Transverse colon (tissue), 4 donors: ENCODE measurements at regions of chr5 and their contacts with region 1.

Region 1: DNA sequence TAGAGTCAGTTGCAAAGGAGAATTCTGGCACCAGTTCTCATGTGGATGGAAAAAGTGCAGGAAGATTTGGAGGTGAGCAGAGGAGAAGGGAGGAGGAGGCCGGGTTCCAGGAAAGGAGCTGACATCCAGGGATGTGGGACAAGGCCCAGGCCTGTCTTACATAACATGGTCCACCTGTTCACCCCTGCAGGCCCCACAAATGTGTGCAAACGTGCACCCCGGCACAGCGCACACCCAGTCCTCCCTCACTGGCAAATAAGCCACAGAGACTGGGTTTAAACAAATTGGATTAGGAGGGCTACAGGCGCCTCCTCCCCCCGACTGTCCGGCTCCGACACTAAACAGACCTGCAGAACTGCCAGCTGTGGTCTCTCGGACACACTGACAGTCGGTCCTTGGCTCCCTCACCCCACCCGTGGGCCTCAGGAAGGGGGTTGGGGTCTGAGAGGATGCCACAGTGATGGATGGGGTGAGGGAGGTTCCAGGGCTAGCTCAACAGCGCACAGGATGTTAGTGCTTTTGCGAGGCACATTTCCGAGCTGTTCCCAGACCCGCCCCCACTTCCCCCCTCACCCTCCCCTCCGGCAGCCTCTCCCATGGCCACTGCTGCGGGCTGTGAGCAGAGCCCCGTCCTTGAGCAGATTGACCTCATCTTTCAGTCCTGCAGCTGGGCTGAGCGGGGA is 43.4 kb upstream of the IL17B start:
- DNase-seq: peak; percentile 47
- H3K4me3 ChIP-seq: no peak overlapping the region
- H3K27ac ChIP-seq: peak overlapping the region; percentile 82 to 97 (median 93)
- H3K4me1 ChIP-seq: peaks cover 16 to 62% (median 23%) of the 10 kb centered on the region in 4 donors
- H3K27me3 ChIP-seq: no peaks in the 10 kb centered on the region
- CTCF ChIP-seq: no peak
- EP300 ChIP-seq: no peak
- POLR2A ChIP-seq: peak; percentile 4

Region 2: DNA sequence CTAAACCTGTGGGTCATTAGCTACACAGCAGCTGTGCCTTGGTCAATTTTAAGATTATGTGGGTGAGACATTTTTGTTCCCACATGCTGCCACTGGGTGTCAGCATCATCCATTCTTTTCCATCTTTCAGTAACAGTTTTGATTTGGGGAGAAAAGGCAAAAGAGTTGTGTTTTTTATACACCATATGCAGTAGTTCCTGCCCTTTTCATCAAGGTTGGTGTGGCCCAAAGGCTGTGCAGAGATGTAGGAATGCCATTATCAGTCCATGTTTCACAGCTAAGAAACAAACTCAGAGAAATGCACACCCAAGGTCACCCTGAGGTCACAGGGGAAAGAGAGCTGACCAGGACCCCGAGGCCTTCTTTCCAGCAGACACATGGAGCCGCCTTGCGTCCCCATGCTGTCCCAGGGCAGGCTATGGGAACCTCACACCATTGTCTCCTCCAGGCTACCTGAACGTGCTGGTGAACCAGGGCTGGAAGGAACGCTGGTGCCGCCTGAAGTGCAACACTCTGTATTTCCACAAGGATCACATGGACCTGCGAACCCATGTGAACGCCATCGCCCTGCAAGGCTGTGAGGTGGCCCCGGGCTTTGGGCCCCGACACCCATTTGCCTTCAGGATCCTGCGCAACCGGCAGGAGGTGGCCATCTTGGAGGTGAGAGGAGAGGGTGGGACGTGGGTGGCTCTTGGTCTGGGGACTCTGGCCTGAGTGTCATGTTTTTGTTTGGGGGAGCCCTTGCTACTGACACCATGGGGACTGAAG is 105.0 kb before region 1 on chr5:
- in situ Hi-C with region 1: loop called in 1 of 4 experiments (anchors 10 kb)
- intact Hi-C with region 1: no loop called
- DNase-seq: peak; percentile 27
- H3K4me3 ChIP-seq: no peak overlapping the region
- H3K27ac ChIP-seq: peak overlapping the region in 1 of 4 donors; percentile 31
- H3K4me1 ChIP-seq: peaks cover 13 to 26% (median 19%) of the 10 kb centered on the region in 4 donors
- H3K27me3 ChIP-seq: no peaks in the 10 kb centered on the region
- CTCF ChIP-seq: peak; percentile 64 to 86 (median 71)
- EP300 ChIP-seq: no peak
- POLR2A ChIP-seq: no peak

Region 3: DNA sequence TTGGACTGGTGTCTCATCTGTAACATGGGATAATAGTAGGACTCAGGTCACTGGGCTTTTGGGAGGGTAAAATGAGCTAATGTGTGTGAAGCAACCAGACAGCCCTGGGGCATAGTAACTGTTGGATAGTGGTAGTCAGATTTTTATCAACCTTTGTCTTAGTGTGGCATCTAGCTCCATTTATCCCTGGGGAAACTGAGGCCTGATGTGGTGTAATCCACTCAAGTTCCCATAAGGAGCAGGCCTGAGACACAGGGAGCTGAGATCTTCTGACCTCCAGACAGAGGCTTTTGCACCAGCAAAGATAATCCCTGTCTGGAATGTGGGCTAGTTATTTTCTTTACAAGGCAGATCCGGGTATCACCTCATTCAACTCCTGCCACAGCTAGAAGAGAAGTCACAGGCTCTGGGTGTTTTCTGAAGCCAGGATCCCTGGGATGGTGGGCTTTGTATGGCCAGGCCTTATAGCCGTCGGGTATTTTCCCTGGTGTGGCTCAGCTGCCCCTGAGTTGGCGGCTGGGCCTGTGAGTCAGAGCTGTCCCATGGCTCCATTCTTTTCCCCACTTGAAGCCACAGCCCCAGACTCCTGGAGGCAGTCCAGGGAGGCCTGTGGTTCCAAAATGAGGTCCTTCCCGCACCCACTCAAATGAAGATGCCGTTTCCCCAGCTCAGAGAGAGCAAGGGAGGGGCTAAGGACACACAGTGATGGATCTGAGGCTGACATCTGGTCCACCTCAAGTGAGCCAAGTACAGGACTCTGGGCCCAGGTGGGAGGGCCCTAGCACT is 689.9 kb after region 1 on chr5:
- in situ Hi-C with region 1: no loop called
- intact Hi-C with region 1: no loop called
- DNase-seq: no peak
- H3K4me3 ChIP-seq: no peak overlapping the region
- H3K27ac ChIP-seq: peak overlapping the region; percentile 12 to 46 (median 28)
- H3K4me1 ChIP-seq: peaks cover 0 to 27% (median 3%) of the 10 kb centered on the region in 4 donors
- H3K27me3 ChIP-seq: no peaks in the 10 kb centered on the region
- CTCF ChIP-seq: no peak
- EP300 ChIP-seq: no peak
- POLR2A ChIP-seq: no peak